ENCODE measurements at regions of chr17 and their contacts with region 1.

Region 1: DNA sequence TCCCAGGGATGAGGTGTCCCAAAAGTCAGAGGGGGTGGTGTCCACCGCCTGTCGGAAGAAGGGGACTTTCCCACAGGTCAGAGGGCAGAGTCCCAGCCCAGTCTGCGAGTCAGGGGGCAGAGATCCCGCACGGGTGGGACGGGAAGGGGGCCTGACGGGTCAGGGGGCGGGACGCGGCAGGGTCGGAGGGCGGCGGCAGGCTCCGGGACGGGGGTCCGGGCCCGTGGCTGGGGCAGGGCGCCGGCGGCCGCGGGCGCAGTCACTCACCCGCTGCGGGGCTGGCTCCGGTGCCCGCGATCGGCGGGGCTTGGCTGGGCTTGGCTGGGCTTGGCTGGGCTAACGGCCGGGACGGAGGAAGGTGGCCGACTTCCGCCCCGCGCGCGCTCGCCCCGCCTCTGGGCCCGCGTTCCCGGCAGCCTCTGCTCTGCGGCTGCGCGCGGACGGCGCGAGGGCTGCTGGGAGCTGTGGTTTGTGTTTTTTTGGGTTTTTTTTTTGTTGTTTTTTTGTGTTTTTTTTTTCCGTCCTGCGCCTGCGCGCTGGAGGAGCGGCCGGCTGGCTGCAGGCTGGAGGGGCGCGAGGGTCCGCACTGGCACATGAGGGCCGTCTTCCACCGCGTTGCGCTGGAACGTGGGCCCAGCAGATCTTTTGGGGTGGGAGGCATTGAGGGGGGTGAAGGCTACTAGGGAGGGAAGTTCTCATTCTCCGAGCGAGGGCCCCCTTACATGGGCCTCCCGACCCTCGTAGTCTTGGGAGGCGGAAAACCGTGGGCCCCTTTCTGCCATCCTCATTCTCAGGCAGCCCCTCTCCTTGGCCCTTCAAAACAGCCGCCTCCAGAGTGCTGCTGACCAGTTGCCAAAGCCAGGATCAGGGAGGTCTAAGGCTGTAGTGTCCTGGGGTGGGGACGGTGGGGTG is at the start of gene CANT1:
- DNase-seq: peak; percentile 92
- H3K4me3 ChIP-seq: peak within 1 kb of the TSS; percentile 47 to 96 (median 69)
- H3K27ac ChIP-seq: peak within 1 kb of the TSS; percentile 61
- H3K4me1 ChIP-seq: peaks cover 52% of the 10 kb centered on the region
- H3K27me3 ChIP-seq: no peaks in the 10 kb centered on the region
- CTCF ChIP-seq: no peak
- POLR2A ChIP-seq: peak; percentile 82
- total RNA-seq, gene CANT1: 76.4 and 93.6 TPM in 2 replicates

Region 2: GRCh38 chr17:78883164-78884122 is 126.2 kb before region 1 on chr17:
- CTCF ChIA-PET with region 1: no interaction called
- POLR2A ChIA-PET with region 1: no interaction called
- dilution Hi-C with region 1: no loop called
- intact Hi-C with region 1: no loop called
- DNase-seq: peak; percentile 97
- H3K4me3 ChIP-seq: no peak overlapping the region
- H3K27ac ChIP-seq: peak overlapping the region; percentile 85
- H3K4me1 ChIP-seq: peaks cover 42% of the 10 kb centered on the region
- H3K27me3 ChIP-seq: no peaks in the 10 kb centered on the region
- CTCF ChIP-seq: no peak
- POLR2A ChIP-seq: no peak

Region 3: GRCh38 chr17:78893684-78894083 is 116.0 kb before region 1 on chr17:
- CTCF ChIA-PET with region 1: no interaction called
- POLR2A ChIA-PET with region 1: no interaction called
- dilution Hi-C with region 1: no loop called
- intact Hi-C with region 1: no loop called
- DNase-seq: no peak
- H3K4me3 ChIP-seq: no peak overlapping the region
- H3K27ac ChIP-seq: no peak overlapping the region
- H3K4me1 ChIP-seq: no peaks in the 10 kb centered on the region
- H3K27me3 ChIP-seq: no peaks in the 10 kb centered on the region
- CTCF ChIP-seq: no peak
- POLR2A ChIP-seq: no peak

Region 4: DNA sequence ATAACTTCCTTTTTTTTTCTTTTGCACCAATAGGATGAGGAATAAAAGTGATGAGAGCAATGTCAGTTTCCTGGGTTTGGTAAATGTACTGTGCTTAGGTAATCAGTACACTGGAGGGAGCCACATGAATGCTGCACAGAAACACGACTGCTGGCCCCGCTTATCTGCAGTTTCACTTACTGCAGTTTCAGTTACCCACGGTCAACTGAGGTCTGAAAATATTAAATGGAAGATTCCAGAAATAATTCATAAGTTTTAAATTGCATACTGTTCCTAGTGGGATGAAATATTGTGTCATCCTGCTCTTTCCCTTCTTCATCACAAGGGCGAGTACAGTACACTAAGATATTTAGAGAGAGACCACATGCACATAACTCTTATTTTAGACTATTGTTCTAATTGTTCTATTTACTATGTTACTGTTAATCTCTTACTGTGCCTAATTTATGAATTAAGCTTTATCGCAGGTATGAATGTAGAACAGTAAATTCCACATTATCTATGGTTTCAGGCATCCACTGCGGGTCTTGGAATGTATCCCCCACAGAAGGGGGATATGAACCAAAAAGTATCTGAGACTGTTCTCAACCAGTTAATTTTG is 23.5 kb before region 1 on chr17:
- CTCF ChIA-PET with region 1: no interaction called
- POLR2A ChIA-PET with region 1: no interaction called
- dilution Hi-C with region 1: no loop called
- intact Hi-C with region 1: loop called (anchors 1 kb)
- DNase-seq: peak; percentile 60
- H3K4me3 ChIP-seq: peak overlapping the region in 1 of 3 experiments; percentile 49
- H3K27ac ChIP-seq: peak overlapping the region; percentile 96
- H3K4me1 ChIP-seq: peaks cover 28% of the 10 kb centered on the region
- H3K27me3 ChIP-seq: no peaks in the 10 kb centered on the region
- CTCF ChIP-seq: peak; percentile 12 to 20
- POLR2A ChIP-seq: no peak

Region 5: GRCh38 chr17:78993241-78993956 is 16.3 kb before region 1 on chr17:
- CTCF ChIA-PET with region 1: interaction called, 10 read pairs
- POLR2A ChIA-PET with region 1: no interaction called
- dilution Hi-C with region 1: no loop called
- intact Hi-C with region 1: loop called (anchors 2 kb)
- DNase-seq: peak; percentile 72
- H3K4me3 ChIP-seq: no peak overlapping the region
- H3K27ac ChIP-seq: peak overlapping the region; percentile 36
- H3K4me1 ChIP-seq: peaks cover 14% of the 10 kb centered on the region
- H3K27me3 ChIP-seq: no peaks in the 10 kb centered on the region
- CTCF ChIP-seq: peak; percentile 85 to 86
- POLR2A ChIP-seq: no peak

Region 6: DNA sequence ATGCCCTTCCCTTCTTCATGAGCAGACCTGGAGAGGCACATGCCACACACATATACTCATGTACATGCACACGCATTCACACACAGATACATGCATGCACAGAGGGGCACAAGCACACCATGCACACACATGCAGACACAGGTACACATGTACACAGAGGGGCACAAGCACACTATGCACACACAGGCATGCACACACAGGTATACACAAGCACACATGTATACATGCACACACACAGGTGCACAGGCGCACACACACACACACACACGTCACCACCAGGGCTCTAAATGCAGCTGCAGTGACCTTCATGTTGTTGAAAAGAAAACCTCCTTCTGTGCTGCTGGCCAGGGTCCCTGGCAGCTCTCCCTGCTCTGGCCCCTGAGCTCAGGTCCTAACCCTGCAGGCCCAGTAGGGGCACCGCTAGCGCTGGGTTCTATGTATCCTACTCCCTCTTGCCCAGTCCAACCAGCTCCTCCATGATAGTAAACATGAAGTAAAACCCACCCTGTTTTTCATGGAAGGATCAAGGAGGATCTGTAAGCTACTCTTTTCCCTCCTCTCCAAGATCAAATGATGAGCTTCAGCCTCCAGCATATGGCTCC is 428.3 kb after region 1 on chr17:
- CTCF ChIA-PET with region 1: no interaction called
- POLR2A ChIA-PET with region 1: no interaction called
- dilution Hi-C with region 1: no loop called
- intact Hi-C with region 1: no loop called
- DNase-seq: no peak
- H3K4me3 ChIP-seq: no peak overlapping the region
- H3K27ac ChIP-seq: no peak overlapping the region
- H3K4me1 ChIP-seq: no peaks in the 10 kb centered on the region
- H3K27me3 ChIP-seq: no peaks in the 10 kb centered on the region
- CTCF ChIP-seq: no peak
- POLR2A ChIP-seq: no peak